Right ventricle myocardium superior (tissue), 1 donor: ENCODE measurements at regions of chr10 and their contacts with region 1.

Region 1: GRCh38 chr10:91910467-91910866 is 1.2 kb upstream of the FGFBP3 start:
- DNase-seq: no peak
- ATAC-seq: no peak

Region 2: GRCh38 chr10:91758303-91759146 is 151.9 kb before region 1 on chr10:
- intact Hi-C with region 1: loop called (anchors 5 kb)
- DNase-seq: no peak
- ATAC-seq: peak; percentile 75

Region 3: DNA sequence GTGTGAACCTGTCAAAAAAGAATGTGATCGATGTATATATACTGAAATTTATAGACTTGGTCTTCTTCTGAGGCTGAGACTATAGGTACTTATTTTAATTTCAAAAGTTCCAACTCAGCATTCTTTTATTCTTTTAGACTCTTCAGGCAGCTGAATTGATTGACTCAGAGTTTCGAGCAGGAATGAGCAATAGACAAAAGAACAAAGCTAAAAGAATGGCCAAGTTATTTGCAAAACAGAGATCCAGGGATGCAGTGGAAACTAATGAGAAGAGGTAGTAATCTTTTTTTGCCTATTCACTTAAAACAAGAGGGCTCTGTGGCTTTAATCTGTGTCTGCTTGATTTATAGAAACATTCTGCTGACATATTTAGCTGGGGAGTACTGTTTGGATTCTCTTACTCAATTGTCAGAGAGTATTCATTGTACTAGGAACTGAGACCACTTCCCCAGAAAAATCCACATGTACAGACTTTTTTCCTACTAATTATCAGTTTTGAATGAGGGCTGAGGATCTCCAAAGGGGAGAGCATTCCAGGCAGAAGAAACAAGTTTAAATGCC is 43.2 kb after region 1 on chr10:
- intact Hi-C with region 1: no loop called
- DNase-seq: no peak
- ATAC-seq: no peak